ENCODE measurements at regions of chr22 and their contacts with region 1.

Region 1: DNA sequence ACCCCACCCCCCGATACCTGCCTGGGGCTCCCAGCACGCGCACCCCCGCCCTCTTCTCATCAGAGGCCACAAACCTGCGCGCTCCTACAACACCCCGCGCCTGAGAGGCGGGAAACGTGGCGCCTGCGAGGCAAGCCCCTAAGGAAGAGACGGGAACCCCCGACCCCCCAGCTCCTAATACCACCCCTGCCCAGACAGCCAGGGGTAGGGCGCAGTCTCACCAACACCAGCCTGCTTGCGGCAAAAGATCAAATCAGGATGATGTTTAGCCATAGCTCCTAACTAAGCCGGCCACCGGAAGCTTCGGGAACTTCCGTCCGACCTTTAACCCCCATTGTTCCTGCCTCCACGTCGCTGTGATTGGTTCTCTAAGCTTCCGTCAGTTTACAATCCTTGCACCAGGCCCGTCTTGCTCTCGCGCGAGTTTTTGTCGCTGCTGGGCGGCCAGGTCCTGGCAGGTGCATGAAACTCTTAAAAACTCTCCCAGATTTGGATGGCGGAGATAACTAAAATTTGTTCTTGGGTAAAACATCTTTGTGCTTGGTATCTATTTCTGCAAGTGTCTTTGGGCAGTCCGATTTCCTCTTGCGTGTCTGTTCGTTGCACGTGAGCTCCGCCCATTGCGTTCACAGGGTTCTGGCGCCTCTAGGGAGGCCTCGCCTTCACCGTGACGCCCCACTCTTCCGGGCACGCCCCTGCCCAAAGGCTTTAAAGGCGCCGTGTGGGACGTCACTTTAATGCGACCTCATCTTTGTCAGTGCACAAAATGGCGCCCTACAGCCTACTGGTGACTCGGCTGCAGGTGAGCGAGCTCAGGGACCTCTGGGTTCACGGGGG is at the starts of genes ACO2 and PHF5A:
- DNase-seq: peak; percentile 95 to 99 (median 98)
- ATAC-seq: peak; percentile 92
- H3K4me3 ChIP-seq: peak within 1 kb of the TSS; percentile 94
- H3K4me3 Mint-ChIP-seq: peak within 1 kb of the TSS; percentile 89
- H3K27ac ChIP-seq: peak within 1 kb of the TSS; percentile 94 to 98
- H3K27ac Mint-ChIP-seq: peak within 1 kb of the TSS; percentile 97
- H3K4me1 ChIP-seq: peaks cover 27% of the 10 kb centered on the region
- H3K4me1 Mint-ChIP-seq: peaks cover 62% of the 10 kb centered on the region
- H3K27me3 ChIP-seq: no peaks in the 10 kb centered on the region
- H3K27me3 Mint-ChIP-seq: no peaks in the 10 kb centered on the region
- CTCF ChIP-seq: no peak
- total RNA-seq, gene ACO2: 69.5 to 71.9 TPM
- total RNA-seq, gene PHF5A: 41.3 to 44.2 TPM

Region 2: GRCh38 chr22:40856513-40857308 is 611.9 kb before region 1 on chr22 and contains the starts of genes ST13 and XPNPEP3:
- CTCF ChIA-PET with region 1: no interaction called
- POLR2A ChIA-PET with region 1: interaction called, 21 read pairs
- intact Hi-C with region 1: loop called (anchors 2 kb)
- DNase-seq: peak; percentile 94 to 99 (median 96)
- ATAC-seq: peak; percentile 86
- H3K4me3 ChIP-seq: peak within 1 kb of the TSS; percentile 96
- H3K4me3 Mint-ChIP-seq: peak within 1 kb of the TSS; percentile 100
- H3K27ac ChIP-seq: peak within 1 kb of the TSS; percentile 95 to 99
- H3K27ac Mint-ChIP-seq: peak within 1 kb of the TSS; percentile 100
- H3K4me1 ChIP-seq: peaks cover 22% of the 10 kb centered on the region
- H3K4me1 Mint-ChIP-seq: peaks cover 80% of the 10 kb centered on the region
- H3K27me3 ChIP-seq: no peaks in the 10 kb centered on the region
- H3K27me3 Mint-ChIP-seq: no peaks in the 10 kb centered on the region
- CTCF ChIP-seq: peak; percentile 38
- total RNA-seq, gene ST13: 164 to 170 TPM
- total RNA-seq, gene XPNPEP3: 16.3 to 17.9 TPM

Region 3: DNA sequence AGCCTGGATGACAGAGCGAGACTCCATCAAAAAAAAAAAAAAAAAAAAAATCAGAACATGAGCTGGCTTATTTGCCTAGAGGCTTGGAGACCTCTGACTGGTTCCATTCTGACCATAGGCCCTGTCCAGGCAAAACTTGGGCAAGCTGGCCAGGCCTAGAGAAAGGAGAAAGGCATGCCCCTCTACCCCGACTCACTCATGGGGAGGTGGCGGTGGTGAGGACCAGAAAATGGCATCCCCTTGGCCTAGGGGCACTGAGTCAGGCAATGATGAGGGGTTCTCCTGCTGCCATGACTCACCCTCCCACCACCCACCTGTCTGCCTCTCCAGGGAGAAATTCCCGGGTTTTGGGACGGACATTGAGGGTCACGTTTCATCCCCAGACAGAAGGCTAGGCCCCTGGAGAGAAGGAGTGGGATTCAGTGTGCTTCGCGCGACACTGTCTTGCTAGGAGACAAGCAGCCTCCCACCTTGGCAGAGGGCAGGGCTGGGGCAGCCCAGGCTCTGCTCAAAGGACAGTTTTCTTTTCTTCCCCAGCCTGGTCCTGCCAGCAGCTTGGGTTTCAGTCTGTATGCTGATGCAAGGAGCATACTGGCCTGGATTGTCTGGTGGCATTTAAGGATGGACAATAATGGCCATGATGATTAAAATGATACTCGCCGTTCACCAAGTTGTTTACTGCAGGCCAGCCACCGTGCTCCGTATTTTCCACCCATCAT is 39.2 kb before region 1 on chr22:
- CTCF ChIA-PET with region 1: no interaction called
- POLR2A ChIA-PET with region 1: no interaction called
- intact Hi-C with region 1: no loop called
- DNase-seq: no peak
- ATAC-seq: no peak
- H3K4me3 ChIP-seq: no peak overlapping the region
- H3K4me3 Mint-ChIP-seq: no peak overlapping the region
- H3K27ac ChIP-seq: no peak overlapping the region
- H3K27ac Mint-ChIP-seq: no peak overlapping the region
- H3K4me1 ChIP-seq: peaks cover 13% of the 10 kb centered on the region
- H3K4me1 Mint-ChIP-seq: peaks cover 15% of the 10 kb centered on the region
- H3K27me3 ChIP-seq: no peaks in the 10 kb centered on the region
- H3K27me3 Mint-ChIP-seq: no peaks in the 10 kb centered on the region
- CTCF ChIP-seq: no peak

Region 4: DNA sequence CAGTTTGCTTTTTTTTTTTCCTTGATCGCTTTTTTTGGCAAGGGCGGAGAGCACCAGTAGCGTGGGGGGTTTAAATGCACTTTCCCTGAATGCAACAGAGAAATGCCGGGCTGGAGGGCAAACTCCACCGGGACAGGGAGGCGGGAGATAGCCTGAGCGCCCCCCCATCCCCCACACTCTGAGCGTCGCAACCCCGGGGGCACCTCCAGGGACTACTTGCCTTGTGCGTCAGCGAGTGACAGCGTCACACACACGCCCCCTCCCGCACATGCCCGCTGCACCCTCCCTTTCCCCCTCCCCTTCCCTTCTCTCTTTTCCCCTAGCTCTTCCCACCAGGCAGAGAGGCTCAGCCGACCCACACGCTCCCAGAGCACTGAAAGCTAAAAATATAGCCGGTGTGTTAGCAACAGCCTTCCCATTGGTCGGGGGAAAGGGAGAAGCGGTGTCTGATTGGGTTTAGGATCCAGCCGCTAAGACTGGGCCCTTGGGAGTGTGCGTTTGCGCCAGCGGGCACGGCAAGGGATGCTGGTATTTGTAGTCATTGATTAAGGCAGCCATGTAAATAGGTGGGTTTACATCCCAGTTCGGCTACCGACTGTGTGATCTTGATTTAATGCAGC is 20.3 kb before region 1 on chr22:
- CTCF ChIA-PET with region 1: interaction called, 10 read pairs
- POLR2A ChIA-PET with region 1: interaction called, 234 read pairs
- intact Hi-C with region 1: loop called (anchors 1 kb)
- DNase-seq: peak; percentile 79 to 97 (median 84)
- ATAC-seq: peak; percentile 73
- H3K4me3 ChIP-seq: peak overlapping the region; percentile 98
- H3K4me3 Mint-ChIP-seq: peak overlapping the region; percentile 94
- H3K27ac ChIP-seq: peak overlapping the region; percentile 97 to 98
- H3K27ac Mint-ChIP-seq: peak overlapping the region; percentile 95
- H3K4me1 ChIP-seq: peaks cover 41% of the 10 kb centered on the region
- H3K4me1 Mint-ChIP-seq: peaks cover 29% of the 10 kb centered on the region
- H3K27me3 ChIP-seq: no peaks in the 10 kb centered on the region
- H3K27me3 Mint-ChIP-seq: no peaks in the 10 kb centered on the region
- CTCF ChIP-seq: no peak

Region 5: DNA sequence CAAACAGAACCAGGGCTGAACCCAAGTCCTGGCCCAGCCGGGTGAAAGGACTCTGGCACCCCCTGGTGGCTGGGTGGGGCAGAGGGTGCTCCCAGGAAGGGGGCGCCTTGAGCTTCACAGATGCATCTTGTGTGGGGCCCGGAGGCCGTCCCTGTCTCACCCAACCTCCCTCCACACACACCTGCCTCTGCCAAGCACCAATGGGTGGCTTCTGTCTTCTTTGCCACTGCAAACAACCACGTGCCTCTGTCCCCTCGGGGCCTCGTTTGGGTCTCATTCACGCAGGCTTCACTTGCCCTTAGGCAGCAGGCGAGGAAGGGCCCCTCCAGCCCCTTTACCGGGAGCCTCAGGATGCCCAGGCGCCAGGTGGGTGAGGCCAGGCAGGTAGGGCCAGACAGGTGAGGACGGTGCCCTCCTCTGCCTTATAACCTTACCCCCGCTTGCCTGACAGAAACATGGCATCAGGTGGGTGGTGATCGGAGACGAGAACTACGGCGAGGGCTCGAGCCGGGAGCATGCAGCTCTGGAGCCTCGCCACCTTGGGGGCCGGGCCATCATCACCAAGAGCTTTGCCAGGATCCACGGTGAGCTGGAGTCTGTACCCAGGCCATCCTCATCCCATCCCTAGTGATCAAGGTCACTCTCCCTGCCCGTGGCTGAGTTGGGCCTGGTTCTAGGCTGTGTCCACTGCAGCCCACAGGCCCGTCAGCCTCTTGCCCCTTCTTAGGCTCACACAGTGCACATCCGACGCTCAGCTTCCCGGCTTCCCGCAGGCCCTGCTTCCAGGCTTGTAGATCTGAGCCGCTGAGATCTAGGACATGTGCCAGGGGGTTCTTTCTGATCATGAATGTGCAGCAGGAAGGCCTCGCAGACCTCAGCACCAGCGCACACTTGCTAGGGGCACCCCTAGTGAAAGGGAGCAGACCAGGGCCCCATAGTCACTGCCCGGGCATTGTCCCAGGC is 58.5 kb after region 1 on chr22:
- CTCF ChIA-PET with region 1: interaction called, 6 read pairs
- POLR2A ChIA-PET with region 1: interaction called, 12 read pairs
- intact Hi-C with region 1: no loop called
- DNase-seq: peak; percentile 57 to 82 (median 68)
- ATAC-seq: peak; percentile 65
- H3K4me3 ChIP-seq: no peak overlapping the region
- H3K4me3 Mint-ChIP-seq: no peak overlapping the region
- H3K27ac ChIP-seq: peak overlapping the region in 1 of 2 donors; percentile 60
- H3K27ac Mint-ChIP-seq: peak overlapping the region; percentile 47
- H3K4me1 ChIP-seq: peaks cover 28% of the 10 kb centered on the region
- H3K4me1 Mint-ChIP-seq: peaks cover 15% of the 10 kb centered on the region
- H3K27me3 ChIP-seq: no peaks in the 10 kb centered on the region
- H3K27me3 Mint-ChIP-seq: no peaks in the 10 kb centered on the region
- CTCF ChIP-seq: peak; percentile 80

Region 6: DNA sequence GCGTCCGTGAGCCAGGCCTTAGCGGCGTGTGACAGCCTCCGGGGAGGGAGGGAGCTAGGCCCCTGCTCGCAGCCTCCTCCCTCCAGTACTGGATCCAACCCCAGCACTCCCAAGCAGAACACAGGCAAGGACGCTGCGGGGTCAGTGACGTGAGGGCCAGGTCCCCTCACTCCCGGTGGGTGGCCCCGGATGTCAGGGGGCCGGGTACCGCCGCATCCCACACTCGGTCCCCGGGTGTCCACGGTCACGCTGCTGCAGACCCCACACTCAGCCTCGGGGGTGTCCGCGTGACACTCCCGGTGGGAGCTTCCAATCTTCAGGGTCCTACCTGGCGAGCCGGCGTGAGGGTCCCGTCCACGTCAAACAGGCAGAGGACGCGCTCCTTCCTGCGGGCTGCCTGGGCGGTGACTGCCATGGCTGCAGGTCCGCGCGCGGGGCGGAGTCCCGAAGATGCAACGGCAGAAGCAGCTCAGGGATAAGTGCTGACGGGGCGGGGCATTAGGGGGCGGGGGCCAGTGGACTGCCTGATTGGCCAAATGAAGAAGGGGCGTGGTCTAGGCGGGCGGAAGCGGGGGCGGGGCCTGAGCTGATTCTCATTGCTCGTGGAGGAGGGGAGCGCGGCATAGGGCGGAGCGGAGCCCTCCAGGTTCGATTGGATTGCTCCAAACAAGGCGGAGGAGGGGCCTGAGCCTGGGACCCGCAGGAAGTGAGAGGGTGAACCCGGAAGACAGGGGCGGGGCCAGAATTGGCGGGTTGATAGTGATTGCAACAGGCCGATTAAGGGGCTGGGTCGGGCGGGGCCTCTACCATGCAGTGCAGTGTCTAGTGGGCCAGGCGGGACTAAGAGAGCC is 121.0 kb after region 1 on chr22 and contains the start of gene PMM1:
- CTCF ChIA-PET with region 1: no interaction called
- POLR2A ChIA-PET with region 1: interaction called, 17 read pairs
- intact Hi-C with region 1: loop called in 1 of 2 experiments (anchors 10 kb)
- DNase-seq: peak; percentile 100
- ATAC-seq: peak; percentile 97
- H3K4me3 ChIP-seq: peak within 1 kb of the TSS; percentile 98
- H3K4me3 Mint-ChIP-seq: peak within 1 kb of the TSS; percentile 82
- H3K27ac ChIP-seq: peak within 1 kb of the TSS; percentile 29 to 64
- H3K27ac Mint-ChIP-seq: peak within 1 kb of the TSS; percentile 47
- H3K4me1 ChIP-seq: peaks cover 21% of the 10 kb centered on the region
- H3K4me1 Mint-ChIP-seq: peaks cover 17% of the 10 kb centered on the region
- H3K27me3 ChIP-seq: no peaks in the 10 kb centered on the region
- H3K27me3 Mint-ChIP-seq: no peaks in the 10 kb centered on the region
- CTCF ChIP-seq: no peak
- total RNA-seq, gene PMM1: 24.8 to 25.5 TPM